T-cell (primary cell): ENCODE measurements at regions of chr14 and their contacts with region 1.

Region 1: DNA sequence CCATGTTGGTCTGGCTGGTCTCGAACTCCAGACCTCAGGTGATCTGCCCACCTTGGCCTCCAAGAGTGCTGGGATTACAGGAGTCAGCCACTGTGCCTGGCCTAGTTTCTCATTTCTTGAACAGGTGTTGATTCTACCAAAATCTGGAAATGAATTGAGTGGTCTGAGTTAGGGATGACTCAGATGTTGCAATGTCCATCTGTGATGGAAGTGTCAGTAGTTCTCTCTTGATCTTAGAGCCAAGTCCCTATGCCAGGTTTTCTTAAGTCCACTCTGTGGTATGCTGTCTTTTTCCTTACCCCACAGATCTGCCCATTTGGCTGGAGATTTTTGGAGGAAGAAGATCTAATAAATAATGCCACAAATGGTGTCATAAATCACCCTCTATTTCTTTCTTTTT is 12.6 kb downstream of the SNAPC1 start:
- DNase-seq: no peak
- ATAC-seq: no peak
- H3K4me3 ChIP-seq: no peak overlapping the region
- H3K4me3 Mint-ChIP-seq: no peak overlapping the region
- H3K27ac ChIP-seq: no peak overlapping the region
- H3K27ac Mint-ChIP-seq: no peak overlapping the region
- H3K4me1 ChIP-seq: peaks cover 4 to 11% of the 10 kb centered on the region in 2 experiments
- H3K4me1 Mint-ChIP-seq: peaks cover 12 to 17% (median 15%) of the 10 kb centered on the region in 3 donors
- H3K27me3 ChIP-seq: no peaks in the 10 kb centered on the region
- H3K27me3 Mint-ChIP-seq: no peaks in the 10 kb centered on the region

Region 2: GRCh38 chr14:61355892-61356325 is 419.0 kb before region 1 on chr14:
- CTCF ChIA-PET with region 1: interaction called in 1 of 2 experiments, 10 read pairs
- POLR2A ChIA-PET with region 1: no interaction called
- DNase-seq: peak in 4 of 35 experiments; percentile 26 to 62 (median 40)
- ATAC-seq: peak in 3 of 4 experiments; percentile 37 to 56 (median 45)
- H3K4me3 ChIP-seq: peak overlapping the region in 1 of 2 donors; percentile 2
- H3K4me3 Mint-ChIP-seq: peak overlapping the region; percentile 40 to 67 (median 41)
- H3K27ac ChIP-seq: peak overlapping the region; percentile 0
- H3K27ac Mint-ChIP-seq: peak overlapping the region; percentile 77 to 87
- H3K4me1 ChIP-seq: peaks cover 67 to 80% of the 10 kb centered on the region in 2 experiments
- H3K4me1 Mint-ChIP-seq: peaks cover 0 to 97% (median 96%) of the 10 kb centered on the region in 3 donors
- H3K27me3 ChIP-seq: no peaks in the 10 kb centered on the region
- H3K27me3 Mint-ChIP-seq: no peaks in the 10 kb centered on the region